ENCODE measurements at regions of chr11 and their contacts with region 1.

Region 1: DNA sequence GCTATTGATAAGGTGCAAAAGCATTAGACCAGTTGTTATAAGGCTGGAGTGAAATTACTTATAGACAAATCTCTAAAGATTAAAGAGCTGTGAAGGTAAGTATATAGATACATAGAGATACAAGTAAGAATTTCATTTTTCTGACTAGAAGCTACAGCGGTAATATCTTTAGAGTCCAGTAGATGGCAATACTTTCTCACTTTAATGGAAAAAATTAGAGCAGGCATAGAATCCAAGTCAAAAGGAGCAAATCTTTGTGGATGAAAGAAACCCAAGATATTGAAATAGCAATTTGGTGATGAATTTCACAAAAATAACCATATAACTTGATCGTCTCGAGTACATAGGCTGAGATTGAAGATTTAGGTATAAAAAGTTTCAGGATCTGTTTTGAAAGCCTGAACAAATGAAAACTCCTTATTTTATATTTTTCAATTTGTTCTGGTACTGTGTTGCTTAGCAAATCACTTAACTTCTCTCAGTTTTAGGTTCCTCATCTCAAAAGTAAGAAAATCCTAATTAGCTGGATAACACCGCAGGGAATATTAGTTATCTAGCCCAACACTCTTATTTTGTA is 81.9 kb downstream of the UVRAG start:
- DNase-seq: no peak
- H3K4me3 ChIP-seq: no peak overlapping the region
- H3K27ac ChIP-seq: no peak overlapping the region
- H3K4me1 ChIP-seq: no peaks in the 10 kb centered on the region
- H3K27me3 ChIP-seq: no peaks in the 10 kb centered on the region
- CTCF ChIP-seq: peak; percentile 64 to 83 (median 70)
- POLR2A ChIP-seq: no peak

Region 2: DNA sequence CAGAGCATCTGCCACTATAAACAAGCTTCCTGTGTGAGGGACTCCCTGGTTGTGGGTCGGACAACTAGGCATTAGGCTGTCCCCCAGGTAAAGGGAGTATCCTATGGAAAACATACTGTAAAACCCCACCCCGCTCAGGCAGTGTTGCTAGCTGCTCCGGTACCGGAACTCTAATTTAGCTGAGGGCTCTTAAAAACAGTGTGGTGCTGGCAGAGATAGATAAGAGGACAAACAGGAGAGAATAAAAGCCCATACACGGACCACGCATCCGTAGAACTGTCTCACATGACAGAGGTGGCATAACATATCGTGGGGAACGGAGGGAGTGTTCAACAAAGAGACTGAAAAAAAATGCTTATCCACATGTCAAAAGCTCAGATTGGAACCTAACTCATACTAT is 182.7 kb before region 1 on chr11:
- intact Hi-C with region 1: no loop called
- DNase-seq: no peak
- H3K4me3 ChIP-seq: no peak overlapping the region
- H3K27ac ChIP-seq: no peak overlapping the region
- H3K4me1 ChIP-seq: no peaks in the 10 kb centered on the region
- H3K27me3 ChIP-seq: no peaks in the 10 kb centered on the region
- CTCF ChIP-seq: no peak
- POLR2A ChIP-seq: no peak

Region 3: DNA sequence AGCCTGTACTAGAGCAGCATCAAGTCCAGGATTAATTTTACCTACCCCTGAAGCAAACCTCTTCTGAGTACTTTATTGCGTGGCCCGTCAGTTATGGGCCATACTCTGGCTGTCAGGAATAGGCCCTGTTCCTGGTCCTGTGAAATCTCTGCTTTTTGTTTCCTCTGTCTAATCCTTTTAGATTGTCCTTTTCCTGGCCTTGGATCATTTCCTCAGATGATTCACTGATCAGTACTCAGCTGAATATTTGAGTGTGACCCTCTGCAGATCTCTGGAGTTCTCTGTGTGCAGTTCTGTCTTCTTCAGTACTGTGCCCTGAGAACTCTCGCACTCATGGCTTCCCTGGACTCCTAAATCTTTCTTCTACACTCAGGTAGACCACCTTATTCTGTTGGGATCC is 41.6 kb after region 1 on chr11:
- intact Hi-C with region 1: no loop called
- DNase-seq: no peak
- H3K4me3 ChIP-seq: no peak overlapping the region
- H3K27ac ChIP-seq: no peak overlapping the region
- H3K4me1 ChIP-seq: no peaks in the 10 kb centered on the region
- H3K27me3 ChIP-seq: no peaks in the 10 kb centered on the region
- CTCF ChIP-seq: no peak
- POLR2A ChIP-seq: no peak

Region 4: DNA sequence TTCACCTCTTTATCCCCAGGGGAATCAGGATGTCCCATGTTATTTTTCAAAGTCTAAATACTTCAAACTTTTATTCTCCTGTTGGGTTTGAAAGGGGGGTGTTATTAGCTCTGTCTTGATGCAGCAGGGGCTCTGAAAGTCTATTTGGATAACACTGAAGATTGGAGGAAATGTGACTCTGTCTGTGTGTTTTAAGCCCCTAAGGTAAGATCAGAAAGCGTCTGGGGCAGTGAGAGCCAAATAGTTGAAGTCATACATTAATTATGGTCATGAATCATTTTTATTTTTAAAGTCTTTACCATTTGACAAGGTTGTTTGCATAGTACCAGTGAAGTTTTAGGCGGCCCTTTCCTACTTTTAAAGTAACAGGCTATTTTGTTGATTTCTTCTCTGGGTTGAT is 57.1 kb after region 1 on chr11:
- intact Hi-C with region 1: no loop called
- DNase-seq: no peak
- H3K4me3 ChIP-seq: no peak overlapping the region
- H3K27ac ChIP-seq: no peak overlapping the region
- H3K4me1 ChIP-seq: no peaks in the 10 kb centered on the region
- H3K27me3 ChIP-seq: no peaks in the 10 kb centered on the region
- CTCF ChIP-seq: no peak
- POLR2A ChIP-seq: no peak

Region 5: GRCh38 chr11:76008474-76008873 is 111.5 kb after region 1 on chr11:
- intact Hi-C with region 1: no loop called
- DNase-seq: no peak
- H3K4me3 ChIP-seq: no peak overlapping the region
- H3K27ac ChIP-seq: no peak overlapping the region
- H3K4me1 ChIP-seq: no peaks in the 10 kb centered on the region
- H3K27me3 ChIP-seq: no peaks in the 10 kb centered on the region
- CTCF ChIP-seq: no peak
- POLR2A ChIP-seq: no peak

Region 6: GRCh38 chr11:76152086-76152681 is 255.3 kb after region 1 on chr11:
- intact Hi-C with region 1: loop called (anchors 5 kb)
- DNase-seq: peak; percentile 87 to 88
- H3K4me3 ChIP-seq: peak overlapping the region; percentile 19 to 41
- H3K27ac ChIP-seq: peak overlapping the region in 1 of 2 donors; percentile 47
- H3K4me1 ChIP-seq: peaks cover 0 to 7% of the 10 kb centered on the region in 2 donors
- H3K27me3 ChIP-seq: no peaks in the 10 kb centered on the region
- CTCF ChIP-seq: peak; percentile 95 to 99 (median 96)
- POLR2A ChIP-seq: no peak

Region 7: GRCh38 chr11:76207642-76208401 is 310.9 kb after region 1 on chr11:
- intact Hi-C with region 1: loop called (anchors 5 kb)
- DNase-seq: peak; percentile 78 to 86
- H3K4me3 ChIP-seq: peak overlapping the region; percentile 41 to 42
- H3K27ac ChIP-seq: peak overlapping the region; percentile 5 to 69
- H3K4me1 ChIP-seq: peaks cover 0 to 36% of the 10 kb centered on the region in 2 donors
- H3K27me3 ChIP-seq: no peaks in the 10 kb centered on the region
- CTCF ChIP-seq: peak; percentile 90 to 99 (median 96)
- POLR2A ChIP-seq: peak in 1 of 2 donors; percentile 2

Region 8: GRCh38 chr11:76318744-76319384 is 421.9 kb after region 1 on chr11:
- intact Hi-C with region 1: loop called (anchors 5 kb)
- DNase-seq: peak; percentile 80
- H3K4me3 ChIP-seq: no peak overlapping the region
- H3K27ac ChIP-seq: no peak overlapping the region
- H3K4me1 ChIP-seq: peaks cover 0 to 5% of the 10 kb centered on the region in 2 donors
- H3K27me3 ChIP-seq: peaks cover 0 to 9% of the 10 kb centered on the region in 2 donors
- CTCF ChIP-seq: peak; percentile 84 to 93 (median 90)
- POLR2A ChIP-seq: no peak

Measured in uterus (tissue), 4 donors.